ENCODE measurements at regions of chr11 and their contacts with region 1.

Region 1: DNA sequence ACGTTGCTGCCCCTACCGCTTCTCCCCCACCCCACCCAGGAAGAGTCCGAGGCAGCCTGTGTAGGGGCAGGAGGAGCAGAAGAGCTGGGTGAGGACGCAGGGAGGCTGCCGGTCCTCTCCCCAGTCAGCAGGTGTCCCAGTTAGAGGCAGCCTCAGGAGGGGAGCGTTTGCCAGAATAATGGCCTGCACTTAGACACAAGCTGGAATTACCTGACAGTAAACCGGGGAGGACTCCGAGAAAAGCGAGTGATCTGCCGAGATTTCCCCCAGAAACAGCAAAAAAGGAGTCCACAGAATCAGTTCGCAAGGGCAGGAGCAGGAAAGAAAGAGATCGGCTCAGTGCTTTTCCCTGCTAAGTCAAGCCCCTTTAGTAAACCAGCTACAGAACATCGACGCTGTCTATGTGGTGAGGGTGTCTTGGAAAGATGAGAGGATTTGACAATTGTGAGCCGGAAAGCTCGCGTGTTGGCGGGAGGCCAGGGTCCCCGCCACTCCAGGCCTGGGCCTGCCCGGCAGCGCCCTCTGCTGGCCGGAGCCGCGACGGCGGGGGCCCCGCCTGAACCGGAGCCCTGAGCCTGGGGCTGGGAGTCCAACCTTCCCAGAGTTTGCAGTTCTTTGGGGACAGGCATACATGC is 17.7 kb upstream of the THRSP start:
- DNase-seq: peak; percentile 69
- H3K4me3 Mint-ChIP-seq: peak overlapping the region; percentile 59
- H3K27ac Mint-ChIP-seq: no peak overlapping the region
- H3K4me1 Mint-ChIP-seq: peaks cover 9% of the 10 kb centered on the region
- H3K27me3 Mint-ChIP-seq: no peaks in the 10 kb centered on the region
- CTCF ChIP-seq: peak; percentile 93

Region 2: DNA sequence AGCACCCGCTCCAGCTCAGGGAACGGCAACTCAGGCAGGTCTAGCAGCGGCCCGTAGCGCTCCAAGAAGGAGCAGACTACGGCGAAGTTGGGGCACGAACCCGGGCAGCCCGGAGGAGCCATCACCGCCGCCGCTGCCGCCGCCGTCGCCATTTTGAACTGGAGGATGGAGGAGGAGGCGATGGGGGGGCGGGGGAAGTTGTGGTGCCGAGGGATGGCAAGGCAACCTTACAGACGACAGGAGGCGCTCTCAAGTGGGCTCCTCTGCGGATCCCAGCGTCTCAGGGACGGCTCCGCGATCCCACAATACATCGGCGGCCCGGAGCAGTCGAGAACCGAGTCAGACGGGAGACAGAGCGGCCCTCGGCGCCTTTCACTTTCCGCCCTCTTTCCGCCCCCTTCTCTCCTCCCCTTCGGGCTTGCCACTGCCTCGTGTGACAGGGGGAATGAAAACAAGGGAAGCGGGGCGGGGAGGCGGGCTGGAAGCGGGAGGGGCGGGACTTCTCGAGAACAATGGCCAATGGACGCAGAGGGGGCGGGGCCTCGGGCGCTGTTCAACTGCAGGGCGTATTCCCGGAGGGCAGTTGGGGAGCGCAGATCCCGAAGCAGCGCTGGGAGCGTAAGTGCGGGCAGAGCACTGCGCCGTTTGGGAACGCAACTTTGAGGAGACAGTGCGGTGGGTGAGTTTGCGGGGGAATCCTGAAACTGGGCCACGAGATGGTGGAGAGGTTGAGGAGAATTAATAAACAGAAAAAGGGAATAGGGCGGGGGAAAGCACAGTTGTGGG is 225.2 kb before region 1 on chr11 and contains the starts of genes AAMDC and RSF1:
- CTCF ChIA-PET with region 1: interaction called, 3 read pairs
- POLR2A ChIA-PET with region 1: no interaction called
- intact Hi-C with region 1: loop called (anchors 2 kb)
- DNase-seq: peak; percentile 99
- H3K4me3 Mint-ChIP-seq: peak within 1 kb of the TSS; percentile 93
- H3K27ac Mint-ChIP-seq: peak within 1 kb of the TSS; percentile 90
- H3K4me1 Mint-ChIP-seq: peaks cover 7% of the 10 kb centered on the region
- H3K27me3 Mint-ChIP-seq: no peaks in the 10 kb centered on the region
- CTCF ChIP-seq: peak; percentile 72
- total RNA-seq, gene AAMDC: 13.0 and 13.2 TPM in 2 replicates
- total RNA-seq, gene RSF1: 62.0 and 71.2 TPM in 2 replicates

Region 3: DNA sequence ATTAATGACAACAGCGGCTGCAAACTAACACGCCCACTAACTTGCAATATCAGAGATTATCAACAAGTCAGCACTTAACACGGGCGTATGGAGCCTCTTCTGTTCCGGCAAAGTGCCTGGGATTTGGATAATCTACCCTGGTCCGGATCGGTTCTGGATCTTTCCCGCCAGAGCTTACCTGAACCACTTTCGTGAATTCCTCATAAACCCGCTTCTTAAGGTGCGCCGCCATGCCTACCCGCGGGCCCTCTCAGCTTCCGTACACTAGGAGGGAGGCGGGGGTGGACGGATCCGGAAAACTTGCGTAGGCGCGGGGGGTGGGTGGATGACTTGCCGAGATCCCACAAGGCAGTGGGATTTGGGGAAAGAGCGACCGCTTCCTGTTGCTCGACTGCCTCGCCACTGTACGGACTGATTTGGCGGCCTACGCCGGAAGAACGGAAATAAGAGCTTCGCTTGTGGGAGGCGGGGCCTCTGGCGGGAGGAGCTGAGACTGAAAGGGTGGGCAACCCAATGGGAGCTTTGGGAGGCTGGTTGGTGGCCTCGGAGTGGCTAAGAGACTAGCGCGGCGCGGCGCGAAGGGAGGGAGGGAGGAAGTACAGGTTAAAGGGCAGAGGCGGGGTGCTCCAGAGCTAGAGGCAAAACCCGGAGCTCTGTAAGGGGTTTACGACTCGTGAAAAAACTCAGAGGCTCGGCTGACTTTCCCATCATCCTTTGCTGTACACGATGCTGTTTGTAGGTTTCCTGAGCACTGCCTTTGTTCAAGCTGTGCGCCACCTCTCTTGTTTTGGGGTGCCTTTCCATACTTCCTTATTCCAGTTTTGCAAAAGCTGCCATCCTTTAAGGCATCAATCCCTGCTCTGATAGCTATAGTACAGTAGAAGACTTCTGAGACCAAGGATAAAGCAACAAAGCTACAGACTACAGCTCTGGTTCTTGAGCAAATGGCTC is 51.3 kb before region 1 on chr11 and contains the start of gene INTS4:
- CTCF ChIA-PET with region 1: interaction called, 34 read pairs
- POLR2A ChIA-PET with region 1: interaction called, 30 read pairs
- intact Hi-C with region 1: no loop called
- DNase-seq: peak; percentile 99
- H3K4me3 Mint-ChIP-seq: peak within 1 kb of the TSS; percentile 86
- H3K27ac Mint-ChIP-seq: peak within 1 kb of the TSS; percentile 81
- H3K4me1 Mint-ChIP-seq: peaks cover 11% of the 10 kb centered on the region
- H3K27me3 Mint-ChIP-seq: no peaks in the 10 kb centered on the region
- CTCF ChIP-seq: no peak
- total RNA-seq, gene INTS4: 21.6 and 25.2 TPM in 2 replicates

Region 4: DNA sequence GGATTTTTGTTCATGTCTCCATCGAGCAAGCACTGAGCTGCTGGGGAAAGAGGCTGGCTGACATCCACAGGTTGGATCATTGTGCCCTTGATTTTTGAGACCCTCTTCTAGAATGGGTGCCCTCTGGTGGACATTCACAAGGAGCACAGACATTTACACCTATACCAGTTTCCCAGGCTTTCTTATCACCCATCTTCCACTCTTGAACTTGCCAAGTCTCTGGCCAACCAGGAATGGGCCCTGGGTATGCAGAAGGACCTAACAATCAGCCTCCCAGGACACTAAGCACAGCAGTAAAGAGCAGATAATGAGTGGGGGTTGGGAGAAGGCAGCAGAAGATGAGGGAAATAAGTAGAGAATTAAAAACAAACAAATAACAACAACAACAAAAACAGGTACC is 45.8 kb before region 1 on chr11:
- CTCF ChIA-PET with region 1: interaction called, 34 read pairs
- POLR2A ChIA-PET with region 1: interaction called, 30 read pairs
- intact Hi-C with region 1: no loop called
- DNase-seq: peak; percentile 79
- H3K4me3 Mint-ChIP-seq: no peak overlapping the region
- H3K27ac Mint-ChIP-seq: no peak overlapping the region
- H3K4me1 Mint-ChIP-seq: peaks cover 6% of the 10 kb centered on the region
- H3K27me3 Mint-ChIP-seq: no peaks in the 10 kb centered on the region
- CTCF ChIP-seq: peak; percentile 70

Region 5: DNA sequence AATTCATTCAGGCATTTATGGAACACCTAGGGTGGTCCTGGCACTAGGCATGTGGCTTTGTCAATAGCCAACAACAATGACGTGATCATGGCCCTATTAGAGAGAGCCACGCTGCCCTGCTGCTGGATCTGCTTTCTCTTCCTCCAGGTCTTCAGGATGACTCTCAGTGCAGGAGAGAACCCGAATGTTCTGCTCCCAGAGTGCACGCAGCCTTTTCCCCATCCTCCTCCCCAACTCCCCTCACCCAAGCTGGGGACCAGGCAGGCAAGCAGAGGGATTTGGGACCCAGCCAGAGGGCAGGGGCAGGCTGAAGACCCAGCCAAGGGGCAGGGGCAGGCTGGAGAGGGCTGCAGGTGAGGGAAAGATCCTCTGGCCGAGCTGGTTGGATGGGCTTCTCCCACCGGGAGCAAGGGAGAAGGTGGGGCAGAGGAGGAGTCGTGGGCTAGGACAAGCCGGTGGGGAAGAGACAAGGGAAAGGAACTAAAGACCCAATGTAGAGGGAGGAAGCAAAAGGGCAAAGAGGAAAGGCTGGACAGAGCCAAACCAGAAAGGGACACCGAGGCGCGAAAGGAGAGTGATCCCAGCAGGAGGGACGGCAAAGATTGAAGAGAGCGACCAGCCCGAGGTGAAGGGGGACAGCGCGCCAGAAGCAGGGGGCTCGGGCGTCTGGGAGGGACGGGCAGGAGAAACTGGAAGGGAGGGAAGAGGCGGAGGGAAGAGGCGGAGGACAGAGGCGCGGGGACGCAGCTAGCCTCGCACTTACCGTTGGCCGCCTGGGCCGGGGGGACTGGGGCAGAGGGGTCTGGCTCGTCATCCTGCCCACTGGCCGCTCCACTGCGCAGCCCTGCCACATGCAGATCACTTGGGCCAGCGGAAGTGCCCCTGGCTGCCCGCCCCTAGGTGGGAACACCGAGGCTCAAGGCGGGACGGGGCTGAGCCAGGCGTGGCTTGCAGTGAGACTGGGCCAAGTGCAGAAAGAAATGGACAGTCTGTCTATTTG is 23.3 kb before region 1 on chr11 and contains the start of gene KCTD14:
- CTCF ChIA-PET with region 1: interaction called, 18 read pairs
- POLR2A ChIA-PET with region 1: interaction called, 3 read pairs
- intact Hi-C with region 1: no loop called
- DNase-seq: peak; percentile 35
- H3K4me3 Mint-ChIP-seq: peak within 1 kb of the TSS; percentile 77
- H3K27ac Mint-ChIP-seq: peak within 1 kb of the TSS; percentile 60
- H3K4me1 Mint-ChIP-seq: peaks cover 25% of the 10 kb centered on the region
- H3K27me3 Mint-ChIP-seq: no peaks in the 10 kb centered on the region
- CTCF ChIP-seq: no peak
- total RNA-seq, gene KCTD14: 1.5 and 2.2 TPM in 2 replicates

Region 6: GRCh38 chr11:78030429-78031325 is 15.3 kb before region 1 on chr11:
- CTCF ChIA-PET with region 1: interaction called, 26 read pairs
- POLR2A ChIA-PET with region 1: interaction called, 4 read pairs
- intact Hi-C with region 1: no loop called
- DNase-seq: peak; percentile 84
- H3K4me3 Mint-ChIP-seq: no peak overlapping the region
- H3K27ac Mint-ChIP-seq: peak overlapping the region; percentile 14
- H3K4me1 Mint-ChIP-seq: peaks cover 22% of the 10 kb centered on the region
- H3K27me3 Mint-ChIP-seq: no peaks in the 10 kb centered on the region
- CTCF ChIP-seq: no peak

Region 7: GRCh38 chr11:78079232-78080083 is 33.5 kb after region 1 on chr11 and contains the start of gene NDUFC2:
- CTCF ChIA-PET with region 1: interaction called, 17 read pairs
- POLR2A ChIA-PET with region 1: interaction called, 7 read pairs
- intact Hi-C with region 1: loop called (anchors 1 kb)
- DNase-seq: peak; percentile 72
- H3K4me3 Mint-ChIP-seq: peak within 1 kb of the TSS; percentile 83
- H3K27ac Mint-ChIP-seq: peak within 1 kb of the TSS; percentile 65
- H3K4me1 Mint-ChIP-seq: peaks cover 37% of the 10 kb centered on the region
- H3K27me3 Mint-ChIP-seq: no peaks in the 10 kb centered on the region
- CTCF ChIP-seq: no peak
- total RNA-seq, gene NDUFC2: 156 and 186 TPM in 2 replicates

Region 8: DNA sequence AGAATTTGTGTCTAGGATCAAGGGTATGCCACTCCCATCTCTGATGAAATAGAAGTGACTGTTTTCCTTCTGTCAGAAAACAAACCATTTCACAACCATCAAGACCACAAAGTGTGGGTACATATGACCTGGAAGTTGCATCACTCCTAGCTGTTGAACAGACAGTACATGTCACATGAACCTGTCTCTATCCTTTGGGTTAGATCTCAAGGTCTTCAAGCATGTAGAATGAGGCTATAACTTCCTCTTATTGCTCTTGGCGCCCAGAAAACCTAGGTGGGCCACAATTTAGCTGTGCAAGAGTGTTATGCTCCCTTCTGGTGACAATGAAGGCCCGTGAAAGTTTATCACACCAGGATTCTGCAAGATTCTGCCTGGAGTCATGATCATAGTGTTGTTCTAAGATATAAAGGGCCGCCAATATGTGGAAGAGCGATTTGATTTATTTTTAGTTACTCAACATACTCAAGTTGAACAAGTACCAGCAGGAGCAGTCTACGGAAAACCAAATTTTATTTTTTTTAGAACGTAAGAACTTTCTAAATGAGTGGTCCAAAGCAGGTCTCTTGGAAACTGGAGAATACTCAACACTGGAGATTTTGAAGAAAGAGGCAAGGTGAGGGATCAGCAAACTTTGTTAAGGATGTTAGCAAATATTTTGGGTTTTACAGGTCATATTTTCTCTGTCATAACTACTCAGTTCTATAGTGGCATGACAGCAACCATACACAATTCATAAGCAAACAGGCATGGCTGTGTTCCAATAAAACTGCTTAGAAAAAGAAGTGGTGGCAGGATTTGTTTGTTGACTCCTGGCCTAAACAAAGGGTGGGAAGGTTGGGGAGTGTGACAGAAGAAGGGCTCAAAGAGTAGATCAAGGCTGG is 244.6 kb after region 1 on chr11:
- CTCF ChIA-PET with region 1: no interaction called
- POLR2A ChIA-PET with region 1: no interaction called
- intact Hi-C with region 1: no loop called
- DNase-seq: peak; percentile 96
- H3K4me3 Mint-ChIP-seq: peak overlapping the region; percentile 46
- H3K27ac Mint-ChIP-seq: peak overlapping the region; percentile 95
- H3K4me1 Mint-ChIP-seq: peaks cover 30% of the 10 kb centered on the region
- H3K27me3 Mint-ChIP-seq: no peaks in the 10 kb centered on the region
- CTCF ChIP-seq: no peak

Measured in MCF 10A (cell line).